Activated T-helper 2 cell treated with anti-CD3 and anti-CD28 coated beads, Interferon-gamma antibody, Interleukin-2, Interleukin-4, amounts not matched to agents 10 μg/mL and 5 μg/mL and 100 μg/mL, durations not matched to agents 14 hours and 24 hours and 36 hours (primary cell): ENCODE measurements at regions of chrX and their contacts with region 1.

Region 1: GRCh38 chrX:24838629-24839028 is 144.9 kb downstream of the POLA1 start:
- DNase-seq: no peak
- H3K4me3 Mint-ChIP-seq: no peak overlapping the region
- H3K27ac Mint-ChIP-seq: no peak overlapping the region
- H3K4me1 Mint-ChIP-seq: no peaks in the 10 kb centered on the region
- H3K27me3 Mint-ChIP-seq: no peaks in the 10 kb centered on the region

Region 2: GRCh38 chrX:25004485-25005032 is 165.9 kb after region 1 on chrX:
- intact Hi-C with region 1: loop called (anchors 10 kb)
- DNase-seq: no peak
- H3K4me3 Mint-ChIP-seq: no peak overlapping the region
- H3K27ac Mint-ChIP-seq: no peak overlapping the region
- H3K4me1 Mint-ChIP-seq: peaks cover 8% of the 10 kb centered on the region
- H3K27me3 Mint-ChIP-seq: peaks cover 45% of the 10 kb centered on the region

Region 3: GRCh38 chrX:25144043-25144940 is 305.7 kb after region 1 on chrX:
- intact Hi-C with region 1: loop called (anchors 2 kb)
- DNase-seq: no peak
- H3K4me3 Mint-ChIP-seq: no peak overlapping the region
- H3K27ac Mint-ChIP-seq: no peak overlapping the region
- H3K4me1 Mint-ChIP-seq: peaks cover 2% of the 10 kb centered on the region
- H3K27me3 Mint-ChIP-seq: peaks cover 6% of the 10 kb centered on the region